Esophagus muscularis mucosa (tissue), 4 donors: ENCODE measurements at regions of chr2 and their contacts with region 1.

Region 1: GRCh38 chr2:62505750-62506420 is at the start of gene TMEM17:
- DNase-seq: peak; percentile 96
- H3K4me3 ChIP-seq: peak within 1 kb of the TSS; percentile 65 to 88 (median 74)
- H3K27ac ChIP-seq: peak within 1 kb of the TSS; percentile 88 to 95 (median 90)
- H3K4me1 ChIP-seq: peaks cover 10 to 21% (median 18%) of the 10 kb centered on the region in 4 donors
- H3K27me3 ChIP-seq: no peaks in the 10 kb centered on the region
- CTCF ChIP-seq: no peak
- EP300 ChIP-seq: no peak
- POLR2A ChIP-seq: no peak
- total RNA-seq, gene TMEM17: 1.9 to 3.8 (median 2.4) TPM

Region 2: DNA sequence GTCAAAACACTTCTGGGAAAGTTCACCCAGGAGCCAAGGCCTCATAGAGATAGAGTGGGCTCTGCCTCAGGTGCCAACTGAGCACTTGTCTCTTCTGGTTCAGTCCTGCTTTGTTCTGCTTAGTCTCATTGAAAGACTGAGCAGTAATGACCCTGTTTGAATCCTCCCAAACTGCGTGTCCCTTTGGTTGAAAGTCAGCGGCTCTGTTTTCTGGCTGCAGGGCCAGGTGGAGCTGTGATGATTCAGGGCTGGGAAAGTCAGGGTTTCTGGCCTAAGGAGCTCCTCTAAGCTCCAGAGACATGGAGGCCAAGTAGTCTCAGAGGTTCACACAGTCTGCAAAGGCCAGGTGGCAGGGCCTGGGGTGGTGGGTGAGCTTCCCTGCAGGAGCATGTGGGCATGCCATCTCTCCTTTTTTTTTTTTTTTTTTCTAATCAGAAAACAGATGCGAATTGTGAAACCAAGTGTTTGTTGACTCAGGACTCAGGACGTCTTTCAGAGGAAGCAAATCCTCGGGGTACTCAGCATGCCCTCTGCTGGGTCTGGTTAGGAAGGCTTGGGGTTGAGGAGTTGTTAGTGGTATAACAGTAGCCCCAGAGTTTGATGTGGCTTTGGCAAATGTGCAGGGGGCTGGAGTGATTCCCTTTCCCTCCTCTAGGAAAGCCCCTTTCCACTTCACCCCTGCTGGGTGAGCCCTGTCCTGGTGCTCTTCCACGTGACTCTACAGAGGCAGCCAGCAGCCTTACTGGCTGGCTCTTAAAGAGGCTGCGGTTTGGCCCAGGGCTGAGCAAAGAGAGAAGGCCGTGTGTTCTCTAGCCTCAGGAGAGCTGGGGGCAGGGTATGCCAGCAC is 38.2 kb before region 1 on chr2:
- intact Hi-C with region 1: loop called (anchors 5 kb)
- DNase-seq: no peak
- H3K4me3 ChIP-seq: no peak overlapping the region
- H3K27ac ChIP-seq: peak overlapping the region; percentile 24 to 53 (median 26)
- H3K4me1 ChIP-seq: peaks cover 8 to 67% (median 61%) of the 10 kb centered on the region in 4 donors
- H3K27me3 ChIP-seq: no peaks in the 10 kb centered on the region
- CTCF ChIP-seq: no peak
- EP300 ChIP-seq: no peak
- POLR2A ChIP-seq: no peak

Region 3: DNA sequence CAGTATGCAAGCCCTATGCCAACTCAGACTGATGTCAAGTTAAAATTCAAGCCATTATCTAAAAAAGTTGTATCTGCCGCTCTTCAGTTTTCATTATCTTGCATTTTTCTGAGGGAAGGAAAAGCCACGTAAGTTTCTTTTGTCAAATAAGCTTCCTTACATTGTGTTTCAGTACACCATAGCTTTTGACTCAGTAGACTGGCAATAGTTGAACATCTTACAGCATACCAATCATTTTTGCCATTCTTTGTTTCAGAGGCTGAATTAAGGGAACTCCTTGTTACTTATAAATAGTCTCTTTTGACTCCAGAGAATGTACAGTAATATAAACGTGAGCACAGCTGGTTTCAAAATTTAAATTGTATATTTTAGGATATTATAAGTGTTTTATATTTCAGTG is 320.3 kb after region 1 on chr2:
- intact Hi-C with region 1: no loop called
- DNase-seq: no peak
- H3K4me3 ChIP-seq: no peak overlapping the region
- H3K27ac ChIP-seq: peak overlapping the region in 1 of 4 donors; percentile 31
- H3K4me1 ChIP-seq: peaks cover 10 to 34% (median 23%) of the 10 kb centered on the region in 4 donors
- H3K27me3 ChIP-seq: no peaks in the 10 kb centered on the region
- CTCF ChIP-seq: no peak
- EP300 ChIP-seq: no peak
- POLR2A ChIP-seq: no peak